ENCODE measurements at regions of chr5 and their contacts with region 1.

Region 1: DNA sequence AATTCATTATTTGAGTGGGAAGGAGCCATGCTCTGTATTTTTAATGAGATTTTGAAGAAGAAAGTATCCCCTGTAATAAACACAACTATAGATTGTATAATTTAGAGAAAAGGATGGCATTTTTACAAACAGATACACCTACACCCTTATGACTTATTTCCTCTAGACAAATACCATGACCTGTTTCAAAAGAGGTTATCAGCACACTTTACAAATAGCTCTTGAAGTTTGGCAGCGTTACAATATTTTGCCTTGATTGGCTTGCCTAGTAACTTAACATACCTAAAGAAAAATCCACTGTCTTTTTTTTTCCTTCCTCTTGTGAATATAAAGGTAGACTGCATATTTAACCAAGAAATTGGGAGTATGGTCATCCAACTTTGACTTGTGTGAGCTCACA is 28.5 kb upstream of the CETN3 start:
- DNase-seq: no peak
- ATAC-seq: no peak
- H3K4me3 ChIP-seq: no peak overlapping the region
- H3K27ac ChIP-seq: no peak overlapping the region
- H3K4me1 ChIP-seq: no peaks in the 10 kb centered on the region
- H3K27me3 ChIP-seq: no peaks in the 10 kb centered on the region

Region 2: GRCh38 chr5:90783460-90784333 is 345.6 kb after region 1 on chr5:
- intact Hi-C with region 1: loop called (anchors 5 kb)
- DNase-seq: peak; percentile 65 to 79
- ATAC-seq: peak; percentile 84
- H3K4me3 ChIP-seq: no peak overlapping the region
- H3K27ac ChIP-seq: no peak overlapping the region
- H3K4me1 ChIP-seq: no peaks in the 10 kb centered on the region
- H3K27me3 ChIP-seq: no peaks in the 10 kb centered on the region

Measured in aorta (tissue), 5 donors.